Mammary epithelial cell (primary cell): ENCODE measurements at regions of chr4 and their contacts with region 1.

Region 1: DNA sequence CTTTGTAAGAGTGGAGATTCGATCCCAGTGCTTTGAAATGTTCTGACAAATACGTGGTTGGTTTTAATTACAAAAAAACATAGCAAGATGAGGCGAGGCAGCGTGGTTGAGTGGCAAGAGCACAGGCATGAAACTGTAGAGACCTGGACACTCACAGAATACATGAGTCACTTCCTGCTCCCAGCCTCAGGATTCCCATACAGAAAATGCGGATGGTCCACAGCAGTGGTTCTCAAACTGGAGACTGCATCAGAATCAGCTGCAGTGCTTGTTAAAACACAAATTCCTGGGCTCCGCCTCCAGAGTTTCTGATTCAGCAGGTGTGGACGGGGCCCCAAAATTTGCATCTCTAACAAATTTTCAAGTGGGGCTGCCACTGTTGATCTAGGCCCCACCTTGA is 10.1 kb downstream of the OTOP1 start:
- DNase-seq: peak; percentile 87
- H3K4me3 ChIP-seq: no peak overlapping the region
- H3K27ac ChIP-seq: peak overlapping the region; percentile 84
- H3K4me1 ChIP-seq: peaks cover 11% of the 10 kb centered on the region
- H3K27me3 ChIP-seq: no peaks in the 10 kb centered on the region
- CTCF ChIP-seq: no peak

Region 2: GRCh38 chr4:4248029-4248884 is 31.6 kb after region 1 on chr4 and contains the start of gene TMEM128:
- CTCF ChIA-PET with region 1: no interaction called
- dilution Hi-C with region 1: no loop called
- in situ Hi-C with region 1: no loop called
- intact Hi-C with region 1: loop called (anchors 1 kb)
- DNase-seq: peak; percentile 92
- H3K4me3 ChIP-seq: peak within 1 kb of the TSS; percentile 75 to 97 (median 97)
- H3K27ac ChIP-seq: peak within 1 kb of the TSS; percentile 87
- H3K4me1 ChIP-seq: peaks cover 17% of the 10 kb centered on the region
- H3K27me3 ChIP-seq: no peaks in the 10 kb centered on the region
- CTCF ChIP-seq: peak in 1 of 2 donors; percentile 32
- total RNA-seq, gene TMEM128: 20.3 to 28.8 TPM